Natural killer cell (primary cell): ENCODE measurements at regions of chr12 and their contacts with region 1.

Region 1: GRCh38 chr12:57520053-57520871 is at the start of gene DDIT3:
- DNase-seq: peak; percentile 99 to 100
- ATAC-seq: peak; percentile 71 to 91 (median 78)
- H3K4me3 ChIP-seq: peak within 1 kb of the TSS; percentile 99
- H3K4me3 Mint-ChIP-seq: peak within 1 kb of the TSS; percentile 97
- H3K27ac ChIP-seq: peak within 1 kb of the TSS; percentile 99
- H3K27ac Mint-ChIP-seq: peak within 1 kb of the TSS; percentile 99
- H3K4me1 ChIP-seq: peaks cover 61% of the 10 kb centered on the region
- H3K4me1 Mint-ChIP-seq: peaks cover 36 to 79% of the 10 kb centered on the region in 2 donors
- H3K27me3 ChIP-seq: no peaks in the 10 kb centered on the region
- H3K27me3 Mint-ChIP-seq: no peaks in the 10 kb centered on the region
- CTCF ChIP-seq: no peak
- total RNA-seq, gene DDIT3: 117 to 318 (median 182) TPM

Region 2: DNA sequence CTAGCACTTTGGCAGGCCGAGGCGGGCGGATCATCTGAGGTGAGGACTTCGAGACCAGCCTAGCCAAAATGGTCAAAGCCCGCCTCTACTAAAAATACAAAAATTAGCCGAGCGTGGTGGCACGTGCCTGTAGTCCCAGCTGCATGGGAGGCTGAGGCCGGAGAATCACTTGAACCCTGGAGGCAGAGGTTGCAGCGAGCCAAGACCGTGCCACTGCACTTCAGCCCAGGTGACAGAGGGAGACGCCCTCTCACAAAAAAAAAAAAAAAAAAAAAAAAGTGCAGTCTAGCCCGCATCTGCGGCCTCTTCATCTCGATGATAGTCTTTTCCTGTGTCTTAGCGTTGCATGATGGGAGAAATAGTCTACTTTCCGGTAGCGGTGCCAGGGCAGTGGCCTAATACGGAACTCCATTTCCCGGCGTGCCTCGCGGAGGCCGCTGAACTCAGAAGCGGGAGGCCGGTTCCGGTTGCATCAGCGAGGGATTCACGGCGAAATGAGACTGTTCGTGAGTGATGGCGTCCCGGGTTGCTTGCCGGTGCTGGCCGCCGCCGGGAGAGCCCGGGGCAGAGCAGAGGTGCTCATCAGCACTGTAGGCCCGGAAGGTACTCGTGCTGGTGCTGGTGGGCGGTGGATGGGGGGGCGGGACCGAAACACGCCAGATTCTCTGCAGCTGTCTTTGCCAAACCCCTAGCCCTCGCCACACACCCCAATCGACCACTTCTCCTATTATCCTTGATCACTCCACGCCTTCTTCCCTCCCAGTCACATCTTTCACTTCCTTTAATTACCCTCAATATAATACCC is 32.5 kb before region 1 on chr12 and contains the start of gene MARS1:
- intact Hi-C with region 1: loop called (anchors 2 kb)
- DNase-seq: peak; percentile 83 to 97
- ATAC-seq: peak; percentile 96 to 99 (median 98)
- H3K4me3 ChIP-seq: peak within 1 kb of the TSS; percentile 86
- H3K4me3 Mint-ChIP-seq: peak within 1 kb of the TSS; percentile 92
- H3K27ac ChIP-seq: peak within 1 kb of the TSS; percentile 79
- H3K27ac Mint-ChIP-seq: peak within 1 kb of the TSS; percentile 88 to 92
- H3K4me1 ChIP-seq: peaks cover 20% of the 10 kb centered on the region
- H3K4me1 Mint-ChIP-seq: peaks cover 23 to 34% of the 10 kb centered on the region in 2 donors
- H3K27me3 ChIP-seq: no peaks in the 10 kb centered on the region
- H3K27me3 Mint-ChIP-seq: no peaks in the 10 kb centered on the region
- CTCF ChIP-seq: no peak
- total RNA-seq, gene MARS1: 200 to 237 (median 218) TPM